Aorta (tissue), 5 donors: ENCODE measurements at regions of chr1 and their contacts with region 1.

Region 1: GRCh38 chr1:10152709-10153284 is 57.6 kb upstream of the KIF1B start:
- DNase-seq: peak; percentile 70 to 83
- ATAC-seq: peak; percentile 80
- H3K4me3 ChIP-seq: no peak overlapping the region
- H3K27ac ChIP-seq: peak overlapping the region in 1 of 2 donors; percentile 11
- H3K4me1 ChIP-seq: no peaks in the 10 kb centered on the region
- H3K27me3 ChIP-seq: no peaks in the 10 kb centered on the region

Region 2: GRCh38 chr1:9957726-9958125 is 195.1 kb before region 1 on chr1:
- intact Hi-C with region 1: loop called in 1 of 2 experiments (anchors 5 kb)
- DNase-seq: peak in 1 of 2 donors; percentile 17
- ATAC-seq: no peak
- H3K4me3 ChIP-seq: no peak overlapping the region
- H3K27ac ChIP-seq: no peak overlapping the region
- H3K4me1 ChIP-seq: no peaks in the 10 kb centered on the region
- H3K27me3 ChIP-seq: no peaks in the 10 kb centered on the region

Region 3: DNA sequence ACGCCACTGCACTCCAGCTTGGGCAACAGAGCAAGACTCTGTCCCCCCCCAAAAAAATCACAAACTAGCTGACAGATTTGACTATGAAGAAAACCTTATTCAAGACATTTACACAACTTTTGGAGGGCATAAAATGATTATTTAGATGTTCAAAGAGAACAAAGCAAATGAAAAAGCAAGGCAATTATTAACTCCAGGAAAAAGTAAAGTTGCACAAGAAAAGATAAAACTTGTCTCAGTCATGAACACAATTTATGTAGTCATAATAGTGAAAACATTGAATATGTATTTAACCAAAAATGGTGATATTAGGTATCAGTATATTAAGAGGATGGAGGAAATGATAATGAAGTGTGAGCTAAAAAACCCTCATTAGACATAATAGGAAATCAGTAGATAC is 847.7 kb after region 1 on chr1:
- intact Hi-C with region 1: no loop called
- DNase-seq: no peak
- ATAC-seq: no peak
- H3K4me3 ChIP-seq: no peak overlapping the region
- H3K27ac ChIP-seq: no peak overlapping the region
- H3K4me1 ChIP-seq: no peaks in the 10 kb centered on the region
- H3K27me3 ChIP-seq: no peaks in the 10 kb centered on the region